Caco-2 (cell line): ENCODE measurements at regions of chr11 and their contacts with region 1.

Region 1: DNA sequence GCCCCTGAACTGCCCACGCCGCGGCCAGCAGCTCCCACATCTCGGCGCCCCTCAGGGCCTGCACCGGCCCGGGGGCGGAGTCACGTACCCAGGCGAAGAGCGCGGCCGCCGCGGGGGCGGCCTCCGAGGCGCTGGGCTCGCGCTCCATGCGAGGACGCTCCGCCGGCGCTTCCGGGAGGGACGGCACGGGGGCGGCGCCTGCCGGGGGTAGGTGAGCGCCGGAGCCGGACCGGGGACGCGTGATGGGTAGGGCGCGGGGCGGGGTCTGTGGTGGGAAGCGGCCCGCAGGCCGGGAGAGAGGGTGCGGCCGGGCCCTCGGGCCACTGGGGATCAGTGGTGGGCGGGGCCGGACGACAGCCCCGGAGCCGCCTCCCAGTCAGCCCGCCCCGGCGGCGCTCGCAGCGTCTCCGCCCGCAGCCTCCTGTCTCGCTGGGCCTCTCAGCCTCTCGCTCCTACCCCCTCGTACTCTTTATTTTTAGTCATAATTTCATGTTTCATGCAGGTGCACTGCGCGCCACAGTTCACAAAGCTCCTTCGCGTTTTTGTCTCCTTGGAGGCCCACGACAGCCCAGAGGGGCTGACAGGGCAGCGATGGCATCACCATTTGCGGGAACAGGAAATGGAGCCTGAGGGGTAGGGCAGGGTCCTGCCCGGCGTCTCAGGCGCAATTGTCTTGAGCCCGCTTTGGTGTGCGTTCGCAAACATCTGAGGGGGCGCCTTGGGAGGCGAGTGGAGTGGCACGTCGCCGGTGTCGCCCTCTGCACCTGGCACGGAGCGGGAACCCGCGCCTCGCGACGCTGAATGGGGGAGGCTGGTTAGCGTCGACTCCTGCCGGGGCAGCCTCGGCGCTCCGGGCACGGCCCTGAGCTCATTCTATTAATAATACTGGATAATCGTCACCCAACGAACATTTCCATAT is at the start of gene SERGEF:
- DNase-seq: peak; percentile 95 to 98
- H3K4me3 ChIP-seq: peak within 1 kb of the TSS; percentile 54
- H3K4me3 Mint-ChIP-seq: peak within 1 kb of the TSS; percentile 80
- H3K27ac Mint-ChIP-seq: peak within 1 kb of the TSS; percentile 14
- H3K4me1 ChIP-seq: 0 out of 2 replicates have a peak, but pooled peaks cover 9% of the 10 kb centered on the region
- H3K4me1 Mint-ChIP-seq: peaks cover 18% of the 10 kb centered on the region
- H3K27me3 ChIP-seq: no peaks in the 10 kb centered on the region
- H3K27me3 Mint-ChIP-seq: peaks cover 8% of the 10 kb centered on the region
- CTCF ChIP-seq: peak in 1 of 2 experiments; percentile 12
- total RNA-seq, gene SERGEF: 17.5 and 17.8 TPM in 2 replicates

Region 2: GRCh38 chr11:17991783-17992433 is 21.2 kb before region 1 on chr11:
- CTCF ChIA-PET with region 1: no interaction called
- POLR2A ChIA-PET with region 1: no interaction called
- intact Hi-C with region 1: loop called (anchors 1 kb)
- DNase-seq: peak; percentile 69 to 76
- H3K4me3 ChIP-seq: no peak overlapping the region
- H3K4me3 Mint-ChIP-seq: no peak overlapping the region
- H3K27ac Mint-ChIP-seq: no peak overlapping the region
- H3K4me1 ChIP-seq: peaks cover 20% of the 10 kb centered on the region
- H3K4me1 Mint-ChIP-seq: peaks cover 16% of the 10 kb centered on the region
- H3K27me3 ChIP-seq: no peaks in the 10 kb centered on the region
- H3K27me3 Mint-ChIP-seq: no peaks in the 10 kb centered on the region
- CTCF ChIP-seq: peak; percentile 81 to 87

Region 3: GRCh38 chr11:18081551-18081950 is 68.4 kb after region 1 on chr11:
- CTCF ChIA-PET with region 1: no interaction called
- POLR2A ChIA-PET with region 1: no interaction called
- intact Hi-C with region 1: no loop called
- DNase-seq: no peak
- H3K4me3 ChIP-seq: no peak overlapping the region
- H3K4me3 Mint-ChIP-seq: no peak overlapping the region
- H3K27ac Mint-ChIP-seq: no peak overlapping the region
- H3K4me1 ChIP-seq: no peaks in the 10 kb centered on the region
- H3K4me1 Mint-ChIP-seq: no peaks in the 10 kb centered on the region
- H3K27me3 ChIP-seq: no peaks in the 10 kb centered on the region
- H3K27me3 Mint-ChIP-seq: no peaks in the 10 kb centered on the region
- CTCF ChIP-seq: no peak